ENCODE measurements at regions of chr13 and their contacts with region 1.

Region 1: GRCh38 chr13:49585220-49586157 is at the start of gene RCBTB1:
- DNase-seq: peak; percentile 88
- ATAC-seq: peak; percentile 98
- total RNA-seq, gene RCBTB1: 22.3 TPM

Region 2: DNA sequence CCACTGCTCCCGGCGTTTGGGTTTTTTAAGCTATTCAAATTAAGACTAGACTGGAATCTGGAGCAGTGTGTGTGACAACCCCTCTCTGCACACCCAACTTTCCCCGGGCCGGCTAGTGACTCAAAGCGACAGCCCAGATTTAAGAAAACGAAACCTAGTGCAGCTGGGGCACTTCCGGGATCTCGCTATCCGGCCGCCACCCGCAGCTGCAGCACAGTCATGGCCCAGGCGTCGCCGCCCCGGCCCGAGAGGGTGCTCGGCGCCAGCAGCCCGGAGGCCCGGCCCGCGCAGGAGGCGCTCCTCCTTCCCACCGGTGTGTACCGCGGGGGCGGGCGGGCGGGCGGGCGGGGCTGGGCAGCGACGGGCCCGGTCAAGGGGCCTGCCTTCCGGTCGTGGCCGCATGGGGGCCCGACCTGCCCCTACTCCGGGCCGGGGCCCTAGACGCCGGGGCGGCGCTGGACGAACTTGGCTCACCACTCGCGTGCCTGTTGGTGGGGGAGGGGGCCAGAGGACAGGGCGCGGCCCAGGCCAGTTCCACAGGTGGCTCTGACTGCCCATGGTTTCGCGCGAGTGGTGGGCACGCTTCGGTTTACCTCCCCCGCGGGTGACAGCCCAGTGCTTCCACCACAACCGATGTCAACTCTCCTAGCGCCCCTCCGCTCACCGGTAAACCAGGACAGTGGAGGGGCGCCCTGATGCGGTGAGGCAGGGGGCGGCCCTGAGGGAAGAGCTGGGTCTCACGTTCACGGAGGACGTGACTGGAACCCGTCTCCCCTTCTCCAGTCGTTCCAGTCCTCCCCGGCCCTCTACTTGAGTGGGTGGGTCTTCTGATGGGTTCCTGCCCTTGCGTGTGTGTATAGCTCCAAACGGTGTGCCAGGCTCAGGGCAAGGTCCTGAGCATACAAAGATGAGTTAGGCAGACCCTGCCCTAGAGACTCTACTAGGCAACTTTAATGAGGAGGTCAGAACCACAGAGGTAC is 89.4 kb before region 1 on chr13 and contains the start of gene PHF11:
- intact Hi-C with region 1: loop called (anchors 2 kb)
- DNase-seq: peak; percentile 94
- ATAC-seq: peak; percentile 88
- total RNA-seq, gene PHF11: 20.0 TPM